ENCODE measurements at regions of chr4 and their contacts with region 1.

Region 1: GRCh38 chr4:141375855-141376254 is 155.2 kb downstream of the ZNF330 start:
- DNase-seq: peak; percentile 95
- ATAC-seq: peak; percentile 100
- H3K4me3 ChIP-seq: no peak overlapping the region
- H3K27ac ChIP-seq: no peak overlapping the region
- H3K4me1 ChIP-seq: peaks cover 6% of the 10 kb centered on the region
- H3K27me3 ChIP-seq: no peaks in the 10 kb centered on the region
- CTCF ChIP-seq: peak; percentile 93

Region 2: DNA sequence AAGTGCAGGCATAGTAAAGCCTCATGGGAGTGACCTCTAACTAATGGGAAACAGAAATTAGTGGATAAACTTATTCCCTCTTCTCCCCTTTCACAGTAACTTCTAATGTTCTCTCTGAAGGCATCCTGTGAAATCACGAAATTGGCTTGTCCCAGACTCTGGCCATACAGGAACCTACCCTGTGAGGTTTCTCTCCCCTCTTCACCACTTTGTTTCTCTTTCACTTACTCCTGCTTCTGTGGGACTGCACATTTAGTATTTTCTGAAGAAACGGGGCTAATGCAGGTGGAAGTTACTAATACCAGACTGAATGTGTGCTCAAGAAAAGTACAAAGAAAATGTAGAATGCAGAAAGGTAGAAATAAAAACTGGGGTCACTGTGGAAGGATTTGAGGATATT is 135.2 kb before region 1 on chr4:
- CTCF ChIA-PET with region 1: no interaction called
- POLR2A ChIA-PET with region 1: no interaction called
- intact Hi-C with region 1: no loop called
- DNase-seq: no peak
- ATAC-seq: no peak
- H3K4me3 ChIP-seq: no peak overlapping the region
- H3K27ac ChIP-seq: no peak overlapping the region
- H3K4me1 ChIP-seq: no peaks in the 10 kb centered on the region
- H3K27me3 ChIP-seq: no peaks in the 10 kb centered on the region
- CTCF ChIP-seq: no peak

Region 3: DNA sequence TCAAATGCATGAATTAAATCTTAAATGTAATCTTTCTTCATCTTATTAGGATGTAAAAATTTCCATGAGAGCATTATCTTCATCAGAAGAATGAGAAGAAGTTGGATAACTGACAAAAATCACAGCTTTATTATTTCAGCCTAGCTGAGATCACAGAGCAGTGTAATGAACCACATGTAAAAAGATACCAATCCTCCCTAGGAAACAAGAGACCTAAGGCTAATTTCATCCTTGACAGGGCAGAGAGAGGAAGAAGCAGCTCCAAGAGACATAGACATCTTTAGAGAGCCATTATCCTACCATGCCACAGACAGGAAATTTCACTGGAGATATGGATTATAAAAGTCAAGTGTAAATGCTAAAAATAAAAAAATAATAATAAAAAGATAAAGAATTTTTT is 219.7 kb after region 1 on chr4:
- CTCF ChIA-PET with region 1: no interaction called
- POLR2A ChIA-PET with region 1: no interaction called
- intact Hi-C with region 1: no loop called
- DNase-seq: no peak
- ATAC-seq: no peak
- H3K4me3 ChIP-seq: no peak overlapping the region
- H3K27ac ChIP-seq: no peak overlapping the region
- H3K4me1 ChIP-seq: no peaks in the 10 kb centered on the region
- H3K27me3 ChIP-seq: no peaks in the 10 kb centered on the region
- CTCF ChIP-seq: no peak

Region 4: GRCh38 chr4:141711014-141711610 is 335.3 kb after region 1 on chr4:
- CTCF ChIA-PET with region 1: no interaction called
- POLR2A ChIA-PET with region 1: no interaction called
- intact Hi-C with region 1: loop called (anchors 1 kb)
- DNase-seq: peak; percentile 61
- ATAC-seq: peak; percentile 50
- H3K4me3 ChIP-seq: no peak overlapping the region
- H3K27ac ChIP-seq: no peak overlapping the region
- H3K4me1 ChIP-seq: peaks cover 24% of the 10 kb centered on the region
- H3K27me3 ChIP-seq: no peaks in the 10 kb centered on the region
- CTCF ChIP-seq: peak; percentile 76